ENCODE measurements at regions of chr5 and their contacts with region 1.

Region 1: GRCh38 chr5:149114403-149115312 is 26.6 kb upstream of the ABLIM3 start:
- DNase-seq: peak; percentile 54
- H3K4me3 ChIP-seq: peak overlapping the region in 1 of 2 experiments; percentile 8; a peak in 1 of 4 replicates
- H3K27ac ChIP-seq: 0 out of 4 replicates have a peak overlapping the region, but pooled peaks of 1 of the 2 experiments have one; percentile 2
- H3K4me1 ChIP-seq: peaks cover 0 to 8% of the 10 kb centered on the region in 2 experiments; a peak in 1 of 4 replicates
- H3K27me3 ChIP-seq: no peaks in the 10 kb centered on the region
- CTCF ChIP-seq: peak; percentile 85
- EP300 ChIP-seq: no peak
- RAD21 ChIP-seq: peak; percentile 95

Region 2: GRCh38 chr5:148443998-148444397 is 670.7 kb before region 1 on chr5:
- CTCF ChIA-PET with region 1: interaction called, 12 read pairs
- POLR2A ChIA-PET with region 1: no interaction called
- DNase-seq: peak; percentile 52
- H3K4me3 ChIP-seq: no peak overlapping the region
- H3K27ac ChIP-seq: no peak overlapping the region
- H3K4me1 ChIP-seq: no peaks in the 10 kb centered on the region
- H3K27me3 ChIP-seq: no peaks in the 10 kb centered on the region
- CTCF ChIP-seq: peak; percentile 85
- EP300 ChIP-seq: no peak
- RAD21 ChIP-seq: peak; percentile 90

Region 3: DNA sequence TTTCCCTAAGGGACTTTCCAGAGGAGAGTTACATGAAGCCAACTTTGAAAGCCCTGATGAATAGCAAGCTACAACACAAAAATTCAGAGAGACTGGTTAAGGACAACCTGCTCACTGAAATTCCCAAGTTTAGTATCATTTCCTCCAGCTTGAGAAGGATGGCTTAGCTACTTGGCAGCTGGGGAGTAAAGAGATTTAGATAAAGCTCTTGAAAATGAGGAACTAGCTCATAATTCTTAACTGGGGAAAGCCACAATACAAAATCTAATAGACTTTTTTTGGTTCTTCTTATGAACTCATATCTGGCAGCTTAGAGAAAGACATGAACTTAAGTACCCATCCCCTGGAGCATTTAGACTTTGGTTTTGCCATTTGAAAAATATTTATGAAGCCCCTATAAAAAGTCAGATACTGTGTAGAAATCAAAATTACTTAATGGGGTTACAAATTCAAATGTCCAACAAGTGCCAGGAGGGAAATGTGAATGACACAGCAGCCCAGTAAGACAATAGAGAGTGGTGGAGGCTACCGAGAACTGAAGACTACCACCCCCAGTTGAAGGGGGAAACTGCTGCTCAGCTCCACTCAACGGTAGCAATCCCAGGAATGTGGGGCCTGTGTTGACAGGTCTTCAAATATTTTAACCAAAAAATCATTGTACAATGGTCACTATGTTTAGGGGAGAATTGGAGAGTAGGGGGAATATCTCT is 367.7 kb before region 1 on chr5:
- CTCF ChIA-PET with region 1: interaction called, 67 read pairs
- POLR2A ChIA-PET with region 1: no interaction called
- DNase-seq: no peak
- H3K4me3 ChIP-seq: no peak overlapping the region
- H3K27ac ChIP-seq: no peak overlapping the region
- H3K4me1 ChIP-seq: no peaks in the 10 kb centered on the region
- H3K27me3 ChIP-seq: no peaks in the 10 kb centered on the region
- CTCF ChIP-seq: no peak
- EP300 ChIP-seq: no peak
- RAD21 ChIP-seq: no peak

Region 4: DNA sequence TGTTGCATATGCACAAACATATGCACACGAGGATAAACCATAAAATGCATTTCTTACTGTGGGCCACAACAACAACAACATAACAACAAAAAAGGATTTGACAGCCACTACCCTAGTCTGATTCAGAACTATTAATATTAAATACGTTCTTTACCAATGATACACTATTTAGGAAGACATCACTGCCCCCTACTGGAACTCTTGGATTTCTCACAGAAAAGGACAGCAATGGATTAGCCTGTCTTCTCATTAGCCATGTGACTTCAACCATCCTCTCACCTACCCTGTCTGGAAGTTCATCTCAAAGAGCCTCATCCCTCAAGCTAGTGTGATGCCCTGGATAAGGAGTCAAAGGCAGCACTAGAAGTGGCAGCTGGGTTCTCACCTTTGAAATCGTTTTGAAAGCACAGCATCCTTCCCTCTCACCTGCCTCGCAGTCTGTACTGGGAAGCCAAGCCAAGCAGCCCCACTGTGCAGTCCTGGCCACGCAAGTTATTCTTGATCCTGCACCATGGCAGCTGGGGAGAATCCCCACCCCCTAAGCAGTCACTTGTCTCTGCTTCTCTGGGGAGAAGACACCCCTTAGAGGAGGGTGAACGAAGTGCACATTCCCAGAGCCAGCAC is 116.4 kb before region 1 on chr5:
- CTCF ChIA-PET with region 1: interaction called, 12 read pairs
- POLR2A ChIA-PET with region 1: no interaction called
- DNase-seq: peak; percentile 38
- H3K4me3 ChIP-seq: no peak overlapping the region
- H3K27ac ChIP-seq: no peak overlapping the region
- H3K4me1 ChIP-seq: peaks cover 0 to 10% of the 10 kb centered on the region in 2 experiments; a peak in 3 of 4 replicates
- H3K27me3 ChIP-seq: no peaks in the 10 kb centered on the region
- CTCF ChIP-seq: peak; percentile 81
- EP300 ChIP-seq: no peak
- RAD21 ChIP-seq: peak; percentile 78

Region 5: GRCh38 chr5:149046196-149046829 is 68.3 kb before region 1 on chr5:
- CTCF ChIA-PET with region 1: interaction called, 12 read pairs
- POLR2A ChIA-PET with region 1: no interaction called
- DNase-seq: no peak
- H3K4me3 ChIP-seq: no peak overlapping the region
- H3K27ac ChIP-seq: peak overlapping the region in 1 of 2 experiments; percentile 7; a peak in 1 of 4 replicates
- H3K4me1 ChIP-seq: peaks cover 0 to 4% of the 10 kb centered on the region in 2 experiments; a peak in 1 of 4 replicates
- H3K27me3 ChIP-seq: no peaks in the 10 kb centered on the region
- CTCF ChIP-seq: no peak
- EP300 ChIP-seq: no peak
- RAD21 ChIP-seq: no peak

Region 6: DNA sequence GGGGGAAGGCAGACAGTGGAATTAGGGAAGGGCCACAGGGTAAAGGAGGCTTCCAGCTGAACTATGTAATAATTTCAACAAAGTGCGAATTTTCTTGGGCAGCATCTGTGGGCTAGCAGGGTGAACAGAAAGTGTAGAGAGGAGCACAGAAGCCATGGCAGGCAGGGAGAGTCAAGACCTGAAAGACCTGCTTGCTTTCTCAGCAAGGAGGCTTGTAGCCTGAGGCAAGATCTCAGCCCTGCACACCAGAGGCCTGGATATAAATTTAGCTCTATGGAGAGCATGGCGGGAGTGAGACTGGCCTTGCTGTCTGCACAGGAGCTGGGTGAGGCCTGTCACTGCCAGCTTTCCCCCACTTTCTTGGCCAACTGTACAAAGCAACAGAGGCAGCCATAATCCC is 19.7 kb before region 1 on chr5:
- CTCF ChIA-PET with region 1: interaction called, 12 read pairs
- POLR2A ChIA-PET with region 1: no interaction called
- DNase-seq: no peak
- H3K4me3 ChIP-seq: no peak overlapping the region
- H3K27ac ChIP-seq: no peak overlapping the region
- H3K4me1 ChIP-seq: no peaks in the 10 kb centered on the region
- H3K27me3 ChIP-seq: no peaks in the 10 kb centered on the region
- CTCF ChIP-seq: no peak
- EP300 ChIP-seq: no peak
- RAD21 ChIP-seq: no peak

Region 7: GRCh38 chr5:149228618-149229297 is 114.1 kb after region 1 on chr5:
- CTCF ChIA-PET with region 1: no interaction called
- POLR2A ChIA-PET with region 1: no interaction called
- DNase-seq: peak; percentile 34
- H3K4me3 ChIP-seq: no peak overlapping the region; a peak in 1 of 4 replicates
- H3K27ac ChIP-seq: 0 out of 4 replicates have a peak overlapping the region, but pooled peaks of 1 of the 2 experiments have one; percentile 2
- H3K4me1 ChIP-seq: peaks cover 0 to 8% of the 10 kb centered on the region in 2 experiments; a peak in 1 of 4 replicates
- H3K27me3 ChIP-seq: no peaks in the 10 kb centered on the region
- CTCF ChIP-seq: peak; percentile 86
- EP300 ChIP-seq: no peak
- RAD21 ChIP-seq: peak; percentile 75

Region 8: DNA sequence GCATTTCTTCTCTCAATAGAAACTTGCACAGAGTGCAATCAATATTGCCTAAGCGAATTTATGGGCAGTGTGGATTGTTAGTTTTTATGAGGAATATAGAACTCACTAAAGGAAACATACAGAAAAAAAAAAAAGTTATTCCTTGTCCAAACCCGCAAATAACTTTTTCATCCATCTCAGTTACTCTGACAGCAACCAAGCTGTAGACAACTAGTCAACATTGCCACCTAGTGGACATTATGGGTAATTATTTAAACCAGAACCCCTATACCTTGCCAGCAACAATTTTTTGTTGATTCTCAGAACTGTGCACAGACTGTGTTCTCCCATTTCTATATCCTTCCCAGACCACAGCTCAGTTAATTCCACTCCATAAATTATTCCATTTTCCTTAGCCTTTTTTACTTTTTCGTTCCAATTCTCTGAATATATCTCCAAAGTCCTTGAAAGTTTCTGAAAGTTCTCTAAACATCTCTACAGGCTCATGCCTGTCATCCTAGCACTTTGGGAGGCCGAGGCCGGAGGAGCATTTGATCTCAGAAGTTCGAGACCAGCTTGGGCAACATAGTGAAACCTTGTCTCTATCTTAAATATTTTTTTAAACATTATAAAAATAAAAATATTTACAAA is 154.4 kb after region 1 on chr5:
- CTCF ChIA-PET with region 1: interaction called, 12 read pairs
- POLR2A ChIA-PET with region 1: no interaction called
- DNase-seq: peak; percentile 73
- H3K4me3 ChIP-seq: peak overlapping the region in 1 of 2 experiments; percentile 22; a peak in 1 of 4 replicates
- H3K27ac ChIP-seq: no peak overlapping the region
- H3K4me1 ChIP-seq: peaks cover 0 to 4% of the 10 kb centered on the region in 2 experiments; a peak in 1 of 4 replicates
- H3K27me3 ChIP-seq: no peaks in the 10 kb centered on the region
- CTCF ChIP-seq: peak; percentile 83
- EP300 ChIP-seq: no peak
- RAD21 ChIP-seq: peak; percentile 67

Measured in SK-N-SH (cell line).